ENCODE measurements at regions of chr11 and their contacts with region 1.

Region 1: DNA sequence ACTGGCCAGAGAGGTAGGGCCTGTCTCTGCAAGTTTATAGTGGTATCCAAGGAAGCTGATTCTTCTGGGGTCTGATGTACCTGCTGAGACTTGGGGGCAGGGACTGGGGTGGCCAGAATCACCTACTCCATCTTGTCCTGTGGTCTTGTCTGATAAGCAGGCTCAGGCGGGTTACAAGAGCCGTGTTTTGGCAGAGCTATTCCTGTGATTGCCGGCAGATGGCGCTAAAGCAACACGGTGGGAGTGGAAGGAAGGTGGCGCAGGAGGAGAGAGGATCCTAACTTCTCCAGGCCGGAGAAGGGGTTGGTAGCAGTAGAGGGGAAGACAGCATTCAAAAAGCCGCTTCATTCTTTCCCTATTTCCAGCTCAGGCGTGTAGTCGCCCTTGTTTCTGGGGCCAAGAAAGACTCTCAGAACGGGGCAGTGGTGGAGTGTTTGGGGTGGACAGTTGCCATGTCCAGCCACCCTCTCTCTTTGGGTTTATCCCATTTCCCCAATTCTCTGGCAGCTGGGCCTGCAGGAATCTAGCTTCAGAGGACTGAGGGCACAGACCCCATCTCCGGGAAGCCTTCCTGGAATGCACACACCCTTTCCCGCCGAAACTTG is 15.1 kb downstream of the CHRM1 start:
- DNase-seq: peak; percentile 66 to 85 (median 78)
- ATAC-seq: peak in 3 of 4 donors; percentile 78 to 82 (median 79)
- H3K4me3 ChIP-seq: no peak overlapping the region
- H3K27ac ChIP-seq: no peak overlapping the region
- H3K4me1 ChIP-seq: peaks cover 0 to 30% (median 12%) of the 10 kb centered on the region in 12 donors
- H3K27me3 ChIP-seq: peaks cover 0 to 3% (median 0%) of the 10 kb centered on the region in 9 donors
- CTCF ChIP-seq: peak in 11 of 12 donors; percentile 94 to 99 (median 97)
- POLR2A ChIP-seq: no peak

Region 2: GRCh38 chr11:62709247-62710000 is 196.6 kb before region 1 on chr11:
- intact Hi-C with region 1: no loop called
- DNase-seq: peak; percentile 97 to 99 (median 98)
- ATAC-seq: peak; percentile 84 to 92 (median 88)
- H3K4me3 ChIP-seq: peak overlapping the region; percentile 38 to 75 (median 64)
- H3K27ac ChIP-seq: peak overlapping the region; percentile 90 to 99 (median 97)
- H3K4me1 ChIP-seq: peaks cover 0 to 72% (median 45%) of the 10 kb centered on the region in 12 donors
- H3K27me3 ChIP-seq: no peaks in the 10 kb centered on the region
- CTCF ChIP-seq: peak in 4 of 12 donors; percentile 8 to 50 (median 26)
- POLR2A ChIP-seq: peak in 1 of 2 donors; percentile 63

Region 3: GRCh38 chr11:62855571-62856332 is 50.3 kb before region 1 on chr11:
- intact Hi-C with region 1: no loop called
- DNase-seq: peak; percentile 96 to 97 (median 96)
- ATAC-seq: peak; percentile 98 to 99 (median 98)
- H3K4me3 ChIP-seq: peak overlapping the region; percentile 61 to 94 (median 76)
- H3K27ac ChIP-seq: peak overlapping the region; percentile 38 to 88 (median 80)
- H3K4me1 ChIP-seq: peaks cover 5 to 54% (median 25%) of the 10 kb centered on the region in 12 donors
- H3K27me3 ChIP-seq: no peaks in the 10 kb centered on the region
- CTCF ChIP-seq: peak in 1 of 12 donors; percentile 18
- POLR2A ChIP-seq: peak; percentile 79 to 97

Region 4: DNA sequence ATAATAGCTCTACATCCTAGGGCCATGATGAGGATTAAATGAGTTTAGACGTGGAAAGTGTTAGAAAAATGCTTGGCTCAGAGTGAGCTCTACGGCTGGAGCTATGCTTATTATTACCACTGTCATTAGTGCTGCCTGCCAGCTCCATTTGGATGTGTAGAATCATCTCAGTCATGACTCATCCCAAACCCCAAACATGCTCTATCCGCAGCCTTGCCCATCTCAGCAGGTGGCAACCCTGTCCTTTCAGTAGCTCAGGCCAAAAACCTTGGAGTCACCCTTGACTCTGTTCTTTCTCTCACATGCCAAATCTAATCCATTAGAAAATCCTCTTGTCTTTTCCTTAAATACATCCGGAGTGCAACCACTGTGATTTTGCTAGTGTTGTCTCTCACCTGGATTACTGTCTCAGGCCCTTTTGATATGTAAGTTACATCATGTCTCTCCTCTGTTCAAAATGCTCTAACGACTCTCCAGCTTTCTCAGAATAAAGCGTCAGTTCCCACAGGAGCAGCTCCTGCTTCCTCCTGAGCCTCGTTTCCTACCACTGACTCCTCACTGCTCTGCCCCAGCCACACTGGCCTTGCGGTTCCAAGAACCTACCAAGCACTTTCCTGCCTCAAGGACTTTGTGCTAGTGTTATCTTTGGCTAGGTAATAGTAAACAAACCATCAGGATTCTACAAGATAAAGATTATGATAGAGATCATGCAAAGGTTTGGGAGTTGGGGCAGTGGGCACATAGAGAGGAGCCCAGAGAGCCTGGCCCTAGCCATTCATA is 25.7 kb after region 1 on chr11:
- intact Hi-C with region 1: no loop called
- DNase-seq: no peak
- ATAC-seq: no peak
- H3K4me3 ChIP-seq: no peak overlapping the region
- H3K27ac ChIP-seq: no peak overlapping the region
- H3K4me1 ChIP-seq: peaks cover 0 to 6% (median 2%) of the 10 kb centered on the region in 12 donors
- H3K27me3 ChIP-seq: peaks cover 4 to 27% (median 9%) of the 10 kb centered on the region in 9 donors
- CTCF ChIP-seq: no peak
- POLR2A ChIP-seq: no peak

Region 5: DNA sequence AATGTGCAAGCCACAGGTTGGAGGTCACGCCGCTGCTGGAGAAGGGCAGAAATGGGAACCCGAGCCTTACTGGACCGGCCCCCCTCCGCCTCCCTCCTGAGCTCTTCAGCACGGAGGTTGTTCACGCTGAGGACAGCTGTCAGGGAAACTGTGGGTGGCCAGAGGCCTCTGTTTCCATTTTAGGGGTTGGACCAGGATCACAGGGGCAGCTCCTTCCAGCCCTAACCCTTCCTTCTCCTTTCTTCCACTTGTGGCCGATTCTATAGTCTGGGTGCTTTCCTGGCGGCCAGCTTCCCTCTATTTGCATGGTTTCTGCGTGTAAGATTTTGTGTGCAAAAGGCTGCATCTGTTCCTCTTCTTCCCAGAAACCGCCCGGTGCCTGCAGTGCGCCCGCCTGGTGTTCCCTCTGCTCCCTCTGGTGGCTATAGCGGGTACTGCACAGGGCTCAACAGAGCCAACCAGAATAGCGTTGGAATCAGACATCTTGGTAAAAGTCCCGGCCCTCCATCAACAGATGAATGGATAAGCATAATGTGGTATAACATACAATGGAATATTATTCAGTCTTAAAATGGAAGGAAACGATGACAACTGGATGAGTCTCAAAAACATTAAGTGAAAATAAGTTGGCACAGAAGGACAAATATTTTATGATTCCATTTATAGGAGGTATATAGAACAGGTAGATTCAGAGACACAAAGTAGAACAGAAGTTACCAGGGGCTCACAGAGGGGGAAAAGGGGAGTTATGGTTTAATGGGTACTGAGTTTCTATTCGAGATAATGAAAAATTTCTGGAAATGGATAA is 118.0 kb after region 1 on chr11:
- intact Hi-C with region 1: loop called (anchors 1 to 2 kb)
- DNase-seq: peak; percentile 81 to 91 (median 84)
- ATAC-seq: peak; percentile 79 to 94 (median 92)
- H3K4me3 ChIP-seq: peak overlapping the region in 1 of 12 donors; percentile 6
- H3K27ac ChIP-seq: no peak overlapping the region
- H3K4me1 ChIP-seq: peaks cover 0 to 10% (median 1%) of the 10 kb centered on the region in 12 donors
- H3K27me3 ChIP-seq: peaks cover 0 to 10% (median 0%) of the 10 kb centered on the region in 9 donors
- CTCF ChIP-seq: peak; percentile 99 to 100 (median 99)
- POLR2A ChIP-seq: no peak

Measured in heart left ventricle (tissue), 16 donors.